PC-3 (cell line): ENCODE measurements at regions of chrX and their contacts with region 1.

Region 1: DNA sequence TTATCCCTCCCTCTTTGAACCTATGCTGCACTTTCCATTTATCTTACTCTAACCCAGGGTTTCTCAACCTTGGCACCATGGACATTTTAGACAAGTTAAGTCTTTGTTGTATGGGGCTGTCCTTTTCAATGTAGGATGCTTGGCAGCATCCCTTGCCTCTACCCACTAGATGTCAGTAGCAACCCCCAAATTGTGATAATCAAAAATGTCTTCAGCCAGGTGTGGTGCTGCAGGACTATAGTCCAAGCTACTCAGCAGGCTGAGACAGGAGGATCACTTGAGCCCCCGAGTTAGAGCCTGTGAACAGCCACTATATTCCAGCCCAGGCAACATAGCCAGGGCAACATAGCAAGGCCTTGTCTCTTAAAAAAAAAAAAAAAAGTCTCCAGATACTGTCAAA is 7.0 kb downstream of the LRCH2 start:
- DNase-seq: peak; percentile 66
- ATAC-seq: peak; percentile 88
- H3K4me3 ChIP-seq: no peak overlapping the region
- H3K27ac ChIP-seq: no peak overlapping the region
- H3K4me1 ChIP-seq: 0 out of 2 replicates have a peak, but pooled peaks cover 3% of the 10 kb centered on the region
- H3K27me3 ChIP-seq: peaks cover 19% of the 10 kb centered on the region
- CTCF ChIP-seq: peak; percentile 74

Region 2: DNA sequence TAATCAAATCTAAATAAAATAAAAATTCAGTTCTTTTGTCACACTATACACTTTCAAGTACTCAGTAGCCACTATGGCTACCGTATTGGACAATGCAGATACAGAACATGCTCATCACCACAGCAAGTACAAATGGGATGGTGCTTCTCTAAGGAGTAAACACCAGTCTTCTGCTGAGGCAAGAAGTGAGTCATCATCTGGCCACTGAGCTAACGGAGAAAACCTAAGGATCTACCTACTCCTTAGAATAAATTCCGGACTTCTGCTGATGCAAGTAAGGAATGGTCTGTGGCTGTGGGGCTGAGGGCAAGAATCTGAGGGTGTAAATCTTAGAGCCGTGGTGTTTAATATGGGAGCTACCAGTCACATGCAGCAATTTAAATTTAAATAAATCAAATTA is 49.0 kb before region 1 on chrX:
- CTCF ChIA-PET with region 1: no interaction called
- POLR2A ChIA-PET with region 1: no interaction called
- intact Hi-C with region 1: no loop called
- DNase-seq: no peak
- ATAC-seq: no peak
- H3K4me3 ChIP-seq: no peak overlapping the region
- H3K27ac ChIP-seq: no peak overlapping the region
- H3K4me1 ChIP-seq: no peaks in the 10 kb centered on the region
- H3K27me3 ChIP-seq: no peaks in the 10 kb centered on the region
- CTCF ChIP-seq: no peak

Region 3: GRCh38 chrX:115284877-115285276 is 57.9 kb after region 1 on chrX:
- CTCF ChIA-PET with region 1: no interaction called
- POLR2A ChIA-PET with region 1: no interaction called
- intact Hi-C with region 1: loop called (anchors 1 kb)
- DNase-seq: peak; percentile 2
- ATAC-seq: 0 out of 2 replicates have a peak, but pooled peaks have one; percentile 31
- H3K4me3 ChIP-seq: no peak overlapping the region
- H3K27ac ChIP-seq: no peak overlapping the region
- H3K4me1 ChIP-seq: no peaks in the 10 kb centered on the region
- H3K27me3 ChIP-seq: no peaks in the 10 kb centered on the region
- CTCF ChIP-seq: peak; percentile 46

Region 4: DNA sequence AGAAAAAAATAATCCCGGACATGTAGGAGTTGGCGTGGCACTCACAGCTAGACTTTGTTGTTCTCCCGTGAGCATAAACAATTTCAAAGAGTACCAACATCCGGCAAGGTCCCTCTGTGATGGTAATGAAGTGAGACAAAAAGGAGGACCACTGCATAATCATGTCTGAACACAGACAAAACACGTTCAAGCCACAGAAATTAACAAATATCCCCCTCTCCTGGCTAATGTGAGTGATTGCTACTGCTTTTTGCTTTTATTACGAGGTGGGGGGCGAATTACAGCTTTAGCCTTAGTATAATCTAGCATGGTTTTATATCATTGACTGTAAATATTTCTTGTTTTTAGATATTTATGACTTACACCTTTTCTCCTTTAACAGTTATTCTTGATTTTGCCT is 452.5 kb after region 1 on chrX:
- CTCF ChIA-PET with region 1: no interaction called
- POLR2A ChIA-PET with region 1: no interaction called
- intact Hi-C with region 1: loop called (anchors 2 kb)
- DNase-seq: peak; percentile 56
- ATAC-seq: peak; percentile 59
- H3K4me3 ChIP-seq: no peak overlapping the region; the same call in 1 of the 2 replicates
- H3K27ac ChIP-seq: no peak overlapping the region
- H3K4me1 ChIP-seq: no peaks in the 10 kb centered on the region
- H3K27me3 ChIP-seq: no peaks in the 10 kb centered on the region
- CTCF ChIP-seq: peak; percentile 69

Region 5: GRCh38 chrX:115690511-115691216 is 463.7 kb after region 1 on chrX:
- CTCF ChIA-PET with region 1: no interaction called
- POLR2A ChIA-PET with region 1: no interaction called
- intact Hi-C with region 1: loop called (anchors 2 kb)
- DNase-seq: peak; percentile 84
- ATAC-seq: peak; percentile 74
- H3K4me3 ChIP-seq: no peak overlapping the region
- H3K27ac ChIP-seq: no peak overlapping the region
- H3K4me1 ChIP-seq: peaks cover 6% of the 10 kb centered on the region; the same call in 1 of the 2 replicates
- H3K27me3 ChIP-seq: no peaks in the 10 kb centered on the region
- CTCF ChIP-seq: peak; percentile 81